ENCODE measurements at regions of chr9 and their contacts with region 1.

Region 1: DNA sequence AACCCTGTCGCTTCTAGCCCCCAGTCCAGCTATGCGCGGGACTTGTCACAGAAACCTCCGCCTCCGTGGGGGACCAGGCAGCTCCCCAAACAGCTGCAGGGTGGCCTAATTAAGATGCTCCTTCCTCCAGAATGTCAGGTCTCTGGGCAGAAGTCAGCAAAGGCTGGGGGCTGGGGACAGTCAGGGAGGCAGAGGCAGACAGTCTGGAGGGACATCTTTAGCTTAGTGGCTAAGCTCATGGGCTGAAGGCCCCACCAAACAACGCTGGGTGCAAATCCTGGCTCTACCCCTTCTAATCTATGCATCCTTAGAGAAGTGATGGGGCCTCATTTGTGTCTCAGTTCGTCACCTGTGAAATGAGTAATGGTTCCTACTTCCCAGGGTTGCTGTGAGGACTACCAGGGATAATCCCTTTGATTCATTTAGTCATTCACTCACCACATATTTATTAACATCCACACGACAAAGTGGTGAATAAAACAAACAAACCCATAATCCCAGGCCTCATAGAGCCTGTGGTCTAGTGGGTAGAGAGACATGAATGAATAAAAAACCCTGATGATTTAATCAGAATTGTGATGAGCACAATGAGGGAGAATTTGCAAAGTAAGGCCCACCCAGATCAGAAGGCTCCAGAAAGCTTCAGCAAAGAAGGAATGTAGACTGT is 20.2 kb upstream of the MED27 start:
- DNase-seq: no peak
- H3K4me3 ChIP-seq: no peak overlapping the region
- H3K27ac ChIP-seq: no peak overlapping the region
- H3K4me1 ChIP-seq: no peaks in the 10 kb centered on the region
- H3K27me3 ChIP-seq: peaks cover 24% of the 10 kb centered on the region
- CTCF ChIP-seq: no peak
- EP300 ChIP-seq: no peak
- POLR2A ChIP-seq: no peak

Region 2: GRCh38 chr9:133290751-133291302 is 1191.0 kb after region 1 on chr9:
- in situ Hi-C with region 1: no loop called
- intact Hi-C with region 1: loop called (anchors 5 kb)
- DNase-seq: no peak
- H3K4me3 ChIP-seq: no peak overlapping the region
- H3K27ac ChIP-seq: no peak overlapping the region
- H3K4me1 ChIP-seq: no peaks in the 10 kb centered on the region
- H3K27me3 ChIP-seq: peaks cover 3% of the 10 kb centered on the region
- CTCF ChIP-seq: no peak
- EP300 ChIP-seq: no peak
- POLR2A ChIP-seq: no peak

Measured in transverse colon (tissue), 4 donors.